ENCODE measurements at regions of chr19 and their contacts with region 1.

Region 1: DNA sequence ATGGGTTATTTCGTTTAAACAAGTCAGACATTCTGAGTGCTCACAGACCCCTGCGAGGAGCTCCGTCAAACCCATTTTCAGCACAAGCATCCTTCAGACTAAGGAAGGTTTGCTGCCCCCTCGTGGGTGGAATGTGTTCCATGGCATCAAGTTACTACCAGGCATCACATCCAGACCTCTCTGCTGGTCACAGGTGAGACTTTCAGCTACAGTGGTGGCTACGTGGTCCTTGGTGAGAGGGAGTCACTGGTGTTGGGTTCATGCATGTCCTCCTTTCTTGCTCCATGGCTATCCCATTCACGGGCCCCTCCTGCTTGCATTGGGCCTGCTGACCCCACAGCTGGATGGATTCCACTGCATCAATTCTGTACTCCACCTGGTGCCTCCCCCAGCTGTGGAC is 9.1 kb upstream of the LILRB5 start:
- DNase-seq: peak; percentile 66 to 99
- H3K4me3 ChIP-seq: no peak overlapping the region
- H3K27ac ChIP-seq: no peak overlapping the region
- H3K4me1 ChIP-seq: peaks cover 0 to 2% (median 0%) of the 10 kb centered on the region in 4 experiments; a peak in 2 of 7 replicates
- H3K27me3 ChIP-seq: no peaks in the 10 kb centered on the region
- CTCF ChIP-seq: peak; percentile 79 to 96 (median 91)
- EP300 ChIP-seq: no peak
- POLR2A ChIP-seq: no peak
- RAD21 ChIP-seq: peak; percentile 62 to 68

Region 2: GRCh38 chr19:54203151-54203611 is 63.0 kb before region 1 on chr19:
- CTCF ChIA-PET with region 1: interaction called, 10 read pairs
- POLR2A ChIA-PET with region 1: interaction called, 21 read pairs
- DNase-seq: no peak
- H3K4me3 ChIP-seq: peak overlapping the region in 3 of 4 experiments; percentile 7 to 96 (median 81); a peak in 4 of 8 replicates
- H3K27ac ChIP-seq: no peak overlapping the region
- H3K4me1 ChIP-seq: peaks cover 12 to 25% (median 17%) of the 10 kb centered on the region in 4 experiments
- H3K27me3 ChIP-seq: no peaks in the 10 kb centered on the region
- CTCF ChIP-seq: no peak
- EP300 ChIP-seq: no peak
- POLR2A ChIP-seq: peak in 1 of 2 experiments; percentile 73; a peak in 2 of 3 replicates
- RAD21 ChIP-seq: no peak

Region 3: DNA sequence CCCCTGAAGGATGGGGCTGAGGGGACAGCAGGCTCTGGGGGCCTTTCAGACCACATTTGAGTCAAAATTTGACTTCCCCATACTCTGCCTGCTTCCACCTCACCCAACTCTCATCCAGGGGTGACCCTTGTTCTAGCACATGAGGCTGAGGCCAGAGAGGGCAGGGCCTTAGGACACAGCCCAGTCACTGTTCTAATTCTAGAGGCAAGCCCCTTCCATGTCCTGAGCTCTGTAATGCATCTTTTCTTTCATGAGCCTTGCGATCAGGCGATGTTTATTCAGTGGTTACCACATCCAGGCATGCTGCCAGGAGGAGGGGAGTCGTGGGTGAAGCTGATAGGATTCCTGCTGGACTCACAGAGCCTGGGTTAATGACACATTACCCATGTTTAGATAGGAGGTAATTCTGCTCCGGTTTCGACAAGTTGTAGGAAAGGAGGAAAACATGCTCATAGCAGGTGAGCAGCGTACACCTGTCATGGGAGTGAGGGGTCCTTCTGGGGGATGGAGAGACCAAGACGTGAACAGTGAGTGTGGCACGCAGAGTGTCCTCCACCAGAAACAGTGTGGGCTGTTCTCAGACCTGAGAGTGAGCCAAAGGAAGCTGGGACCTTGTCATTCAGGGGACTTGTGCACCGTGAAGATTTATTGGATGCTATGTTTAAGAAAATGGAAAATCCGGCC is 56.2 kb before region 1 on chr19:
- CTCF ChIA-PET with region 1: interaction called, 4 read pairs
- POLR2A ChIA-PET with region 1: interaction called, 17 read pairs
- DNase-seq: no peak
- H3K4me3 ChIP-seq: no peak overlapping the region
- H3K27ac ChIP-seq: no peak overlapping the region
- H3K4me1 ChIP-seq: peaks cover 0 to 4% (median 4%) of the 10 kb centered on the region in 4 experiments; a peak in 5 of 7 replicates
- H3K27me3 ChIP-seq: no peaks in the 10 kb centered on the region
- CTCF ChIP-seq: no peak
- EP300 ChIP-seq: no peak
- POLR2A ChIP-seq: no peak
- RAD21 ChIP-seq: no peak

Region 4: GRCh38 chr19:54279406-54279962 is 13.4 kb after region 1 on chr19:
- CTCF ChIA-PET with region 1: interaction called, 31 read pairs
- POLR2A ChIA-PET with region 1: no interaction called
- DNase-seq: no peak
- H3K4me3 ChIP-seq: no peak overlapping the region
- H3K27ac ChIP-seq: no peak overlapping the region
- H3K4me1 ChIP-seq: no peaks in the 10 kb centered on the region
- H3K27me3 ChIP-seq: no peaks in the 10 kb centered on the region; a peak in 1 of 7 replicates
- CTCF ChIP-seq: no peak
- EP300 ChIP-seq: no peak
- POLR2A ChIP-seq: no peak
- RAD21 ChIP-seq: no peak

Region 5: DNA sequence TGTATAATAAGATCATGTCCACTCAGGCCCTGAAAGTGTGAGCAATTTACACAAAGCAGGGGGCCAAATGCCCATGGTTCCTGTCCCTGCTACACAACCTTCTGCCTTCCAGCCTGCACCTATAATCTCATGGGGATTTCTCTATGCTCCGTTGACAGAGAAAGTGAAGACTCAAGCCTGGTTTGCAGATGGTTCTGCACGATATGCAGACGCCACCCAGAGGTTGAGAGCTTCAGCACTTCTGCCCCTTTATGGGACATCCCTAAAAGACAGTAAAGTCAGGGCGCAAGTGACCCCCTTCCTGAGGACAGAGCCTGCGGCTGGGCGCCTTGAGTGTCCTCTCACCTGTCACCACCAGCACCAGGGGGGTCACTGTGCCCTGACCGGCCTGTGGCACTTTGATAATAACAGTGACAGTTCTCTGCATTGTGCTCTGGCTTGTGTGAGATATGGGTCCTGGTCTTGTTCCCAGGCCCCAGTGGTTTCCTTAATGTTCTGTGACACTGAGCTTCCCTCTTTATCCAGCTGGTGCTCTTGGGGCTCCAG is 31.7 kb after region 1 on chr19:
- CTCF ChIA-PET with region 1: interaction called, 21 read pairs
- POLR2A ChIA-PET with region 1: no interaction called
- DNase-seq: no peak
- H3K4me3 ChIP-seq: no peak overlapping the region
- H3K27ac ChIP-seq: no peak overlapping the region
- H3K4me1 ChIP-seq: no peaks in the 10 kb centered on the region
- H3K27me3 ChIP-seq: 0 out of 7 replicates have a peak, but pooled peaks cover 0 to 8% (median 0%) of the 10 kb centered on the region in 4 experiments
- CTCF ChIP-seq: peak; percentile 32 to 51 (median 39)
- EP300 ChIP-seq: no peak
- POLR2A ChIP-seq: no peak
- RAD21 ChIP-seq: peak; percentile 52 to 60

Region 6: GRCh38 chr19:54316746-54317107 is 50.6 kb after region 1 on chr19:
- CTCF ChIA-PET with region 1: interaction called, 10 read pairs
- POLR2A ChIA-PET with region 1: no interaction called
- DNase-seq: peak; percentile 61 to 78
- H3K4me3 ChIP-seq: no peak overlapping the region
- H3K27ac ChIP-seq: peak overlapping the region; percentile 69; the same call in 1 of the 2 replicates
- H3K4me1 ChIP-seq: no peaks in the 10 kb centered on the region; a peak in 1 of 7 replicates
- H3K27me3 ChIP-seq: no peaks in the 10 kb centered on the region
- CTCF ChIP-seq: no peak
- EP300 ChIP-seq: no peak
- POLR2A ChIP-seq: no peak
- RAD21 ChIP-seq: no peak

Region 7: DNA sequence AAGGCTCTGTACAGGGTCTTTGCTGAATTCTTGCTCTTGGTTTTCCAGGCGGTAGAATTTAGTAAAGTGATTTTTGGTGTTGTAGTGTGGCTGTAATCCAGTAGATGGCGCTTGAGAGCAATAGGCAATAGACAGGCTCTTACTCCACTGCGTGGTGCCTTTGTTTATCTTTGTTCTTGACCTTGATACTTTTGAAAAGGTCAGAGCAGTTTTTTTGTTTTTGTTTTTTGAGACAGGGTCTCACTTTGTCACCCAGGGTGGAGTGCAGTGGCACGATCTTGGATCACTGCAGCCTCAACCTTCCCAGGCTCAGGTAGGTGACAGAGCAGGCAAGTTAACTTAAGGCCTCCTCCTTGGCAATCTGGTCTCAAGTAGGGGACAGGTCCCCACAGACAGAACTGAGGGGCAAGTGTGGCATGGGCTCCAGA is 59.1 kb after region 1 on chr19:
- CTCF ChIA-PET with region 1: interaction called, 15 read pairs
- POLR2A ChIA-PET with region 1: no interaction called
- DNase-seq: peak in 1 of 2 experiments; percentile 65
- H3K4me3 ChIP-seq: no peak overlapping the region
- H3K27ac ChIP-seq: no peak overlapping the region
- H3K4me1 ChIP-seq: peaks cover 0 to 7% (median 5%) of the 10 kb centered on the region in 4 experiments; a peak in 6 of 7 replicates
- H3K27me3 ChIP-seq: peaks cover 0 to 2% (median 0%) of the 10 kb centered on the region in 4 experiments; a peak in 1 of 7 replicates
- CTCF ChIP-seq: peak in 2 of 3 experiments; percentile 74 to 87; a peak in 3 of 4 replicates
- EP300 ChIP-seq: no peak
- POLR2A ChIP-seq: no peak
- RAD21 ChIP-seq: peak; percentile 58

Measured in H1 (cell line).